ENCODE measurements at regions of chr5 and their contacts with region 1.

Region 1: DNA sequence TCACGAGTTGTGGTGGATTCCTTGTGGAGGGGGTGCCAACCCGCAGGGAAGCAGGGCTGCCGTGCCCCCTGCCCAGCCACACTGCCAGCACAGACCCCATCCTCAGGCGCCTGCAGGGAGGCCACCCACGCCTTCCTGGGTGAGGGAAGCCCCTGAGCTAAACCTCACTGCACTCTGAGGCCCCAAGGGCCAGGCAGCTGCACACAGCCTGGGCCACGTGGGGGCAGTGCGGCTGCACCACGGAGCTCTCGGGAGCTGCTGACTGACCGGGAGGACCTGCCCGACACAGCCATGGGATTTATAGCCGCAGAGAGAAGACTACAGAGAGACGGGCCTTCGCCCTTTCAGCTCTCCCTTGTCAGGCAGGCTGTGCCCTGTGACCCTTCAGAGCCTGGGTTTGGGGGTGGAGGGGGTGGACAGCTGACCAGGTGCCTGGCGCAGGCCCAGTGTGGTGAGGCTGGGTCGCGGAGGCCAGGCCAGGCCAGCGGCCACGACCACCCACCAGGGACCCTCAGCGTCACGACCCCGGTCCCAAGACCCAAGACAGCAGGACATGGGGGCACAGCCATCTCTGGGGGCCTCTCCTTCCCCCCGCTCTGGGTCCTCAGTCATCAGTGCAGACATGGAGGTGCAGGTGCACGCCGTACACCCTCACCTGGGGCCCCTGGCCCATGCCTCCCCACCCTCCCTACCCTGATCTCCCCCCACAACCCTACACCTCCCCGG is 4.3 kb upstream of the AHRR start:
- DNase-seq: no peak

Region 2: DNA sequence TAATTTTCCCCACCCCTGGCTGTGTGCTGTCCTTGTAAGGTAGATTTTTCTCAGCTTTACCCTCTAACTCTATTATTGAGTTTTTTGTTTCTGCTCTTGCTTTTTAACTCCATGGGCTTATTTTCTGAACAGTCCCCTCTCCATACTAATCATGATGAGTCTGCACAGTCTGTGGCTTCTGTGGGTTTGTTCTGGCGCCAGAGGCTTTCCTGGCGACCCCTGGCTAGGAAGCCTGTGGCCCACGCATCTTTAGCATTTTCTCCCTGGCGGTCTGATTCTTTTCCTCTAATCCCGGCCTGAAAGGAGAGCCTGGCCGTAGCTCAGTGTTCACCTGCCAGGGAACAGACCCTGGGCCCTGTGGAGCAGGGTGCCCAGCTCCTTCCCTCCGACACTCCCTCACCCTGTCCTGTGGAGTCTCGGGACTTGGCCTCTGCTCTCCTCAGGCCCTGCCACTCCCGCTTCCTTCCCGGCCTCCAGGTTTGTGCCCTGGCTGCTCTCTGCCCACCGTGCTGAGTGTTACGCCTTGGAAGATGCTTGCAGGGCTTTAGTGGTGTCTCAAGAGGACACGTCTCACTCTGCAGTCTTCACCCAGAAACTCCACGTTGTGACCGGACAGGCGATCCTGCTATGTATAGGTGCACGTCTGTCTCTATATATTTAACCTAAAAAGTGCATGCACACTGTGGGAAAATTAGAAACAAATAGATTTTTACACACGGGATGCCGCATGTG is 157.6 kb before region 1 on chr5:
- intact Hi-C with region 1: no loop called
- DNase-seq: peak; percentile 22

Region 3: GRCh38 chr5:285639-286557 is 31.4 kb before region 1 on chr5:
- intact Hi-C with region 1: no loop called
- DNase-seq: peak; percentile 74

Region 4: DNA sequence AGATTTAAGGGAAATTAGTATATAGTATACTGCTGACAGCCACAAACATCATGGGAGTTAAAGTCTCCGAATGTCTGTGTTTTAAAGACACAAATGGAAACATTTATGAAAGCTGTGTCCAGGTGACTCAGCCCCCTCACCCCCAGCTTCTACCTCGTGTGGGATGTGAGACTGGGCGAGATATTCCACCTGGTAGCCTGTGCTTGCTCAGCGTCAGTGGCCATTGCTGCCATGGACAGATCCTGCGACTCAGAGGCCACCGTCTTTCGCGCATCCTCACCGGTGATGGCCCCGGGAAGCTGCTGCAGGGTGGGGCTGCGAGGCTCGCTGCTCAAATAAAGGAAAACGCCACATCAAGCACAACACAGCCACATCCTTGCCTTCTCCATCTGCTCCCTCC is 94.5 kb after region 1 on chr5:
- intact Hi-C with region 1: no loop called
- DNase-seq: peak; percentile 50

Region 5: GRCh38 chr5:431001-431710 is 113.9 kb after region 1 on chr5:
- intact Hi-C with region 1: loop called (anchors 5 kb)
- DNase-seq: no peak